IMR-90 (cell line): ENCODE measurements at regions of chr2 and their contacts with region 1.

Region 1: GRCh38 chr2:217988014-217988839 is 14.6 kb downstream of the TNS1 start:
- DNase-seq: peak; percentile 68
- ATAC-seq: peak; percentile 90
- H3K4me3 ChIP-seq: no peak overlapping the region
- H3K27ac ChIP-seq: no peak overlapping the region
- H3K4me1 ChIP-seq: peaks cover 16% of the 10 kb centered on the region
- H3K27me3 ChIP-seq: no peaks in the 10 kb centered on the region
- CTCF ChIP-seq: peak; percentile 94
- POLR2A ChIP-seq: peak; percentile 27; the same call in 1 of the 2 replicates
- RAD21 ChIP-seq: peak; percentile 99

Region 2: DNA sequence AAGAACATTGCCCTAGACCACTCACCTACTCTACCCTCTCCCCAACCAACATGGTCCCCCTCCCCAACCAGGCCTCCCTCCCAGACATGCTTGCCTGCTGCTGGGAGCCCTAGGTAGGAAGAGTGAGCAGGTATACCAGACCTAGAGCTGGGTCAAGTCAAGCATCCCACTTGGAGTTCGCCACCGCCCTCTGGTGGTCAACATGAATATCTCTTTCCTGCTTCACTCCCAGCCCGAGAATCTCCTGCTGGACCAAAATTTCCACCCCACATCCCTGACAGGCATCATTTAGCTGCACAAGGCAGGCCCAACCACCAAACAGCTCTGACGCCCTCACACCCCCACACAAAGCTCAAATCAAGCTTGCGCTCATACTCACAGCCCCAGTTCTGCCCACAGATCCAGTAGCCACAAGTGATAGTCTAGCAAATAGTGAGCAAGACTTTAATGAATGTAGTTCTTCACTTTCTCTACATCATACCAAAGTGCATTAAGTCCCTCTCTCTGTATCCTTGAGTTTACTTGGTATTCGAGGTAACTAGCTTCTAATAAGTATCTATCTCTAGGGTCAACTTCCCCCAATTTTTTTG is 101.4 kb before region 1 on chr2:
- CTCF ChIA-PET with region 1: interaction called, 3 read pairs
- POLR2A ChIA-PET with region 1: no interaction called
- dilution Hi-C with region 1: no loop called
- in situ Hi-C with region 1: no loop called
- intact Hi-C with region 1: loop called (anchors 1 kb)
- DNase-seq: peak; percentile 73
- ATAC-seq: peak; percentile 57; the same call in 1 of the 2 replicates
- H3K4me3 ChIP-seq: no peak overlapping the region
- H3K27ac ChIP-seq: no peak overlapping the region
- H3K4me1 ChIP-seq: no peaks in the 10 kb centered on the region
- H3K27me3 ChIP-seq: no peaks in the 10 kb centered on the region
- CTCF ChIP-seq: peak; percentile 76
- POLR2A ChIP-seq: no peak
- RAD21 ChIP-seq: peak; percentile 74

Region 3: DNA sequence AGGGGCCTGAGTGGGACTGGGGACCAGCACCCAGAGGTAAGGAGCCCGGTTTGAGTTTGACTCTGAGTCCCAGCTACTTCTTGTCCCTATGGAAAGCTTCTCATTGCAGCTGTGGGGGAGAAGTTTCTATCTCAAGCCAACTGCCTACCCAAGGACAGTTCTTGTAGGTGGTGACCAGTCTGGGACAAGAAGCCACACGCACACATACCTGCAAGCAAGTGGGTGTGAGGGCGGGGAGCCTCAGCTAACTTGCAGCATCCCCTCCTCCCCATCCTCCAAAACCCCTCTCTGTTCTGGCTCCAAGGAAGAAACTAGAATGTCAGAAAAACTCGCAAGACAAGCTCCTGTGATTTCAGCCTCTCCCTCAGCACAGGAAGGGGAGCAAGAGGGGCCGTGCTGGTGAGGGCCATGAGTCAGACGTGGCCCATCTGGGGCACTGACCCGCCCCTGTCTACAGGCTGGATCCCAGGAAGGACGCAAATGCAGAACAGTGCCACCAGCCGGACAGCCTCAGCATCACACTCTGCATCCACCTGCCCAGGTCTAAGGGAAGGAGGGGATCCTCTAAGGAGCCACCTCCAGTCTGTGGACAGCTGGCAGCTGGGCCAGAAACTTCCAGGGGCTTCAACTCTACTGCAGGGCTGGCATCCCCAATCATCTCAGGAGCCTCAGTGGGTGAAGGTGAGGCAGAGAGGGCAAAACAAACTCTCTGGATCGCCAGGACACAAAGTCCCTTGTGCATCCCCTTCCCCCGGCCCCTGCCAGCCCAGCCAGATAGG is 88.8 kb before region 1 on chr2:
- CTCF ChIA-PET with region 1: no interaction called
- POLR2A ChIA-PET with region 1: no interaction called
- dilution Hi-C with region 1: no loop called
- in situ Hi-C with region 1: loop called (anchors 5 kb)
- intact Hi-C with region 1: loop called (anchors 2 kb)
- DNase-seq: peak; percentile 91
- ATAC-seq: peak; percentile 79
- H3K4me3 ChIP-seq: no peak overlapping the region
- H3K27ac ChIP-seq: peak overlapping the region; percentile 71
- H3K4me1 ChIP-seq: peaks cover 41% of the 10 kb centered on the region
- H3K27me3 ChIP-seq: no peaks in the 10 kb centered on the region
- CTCF ChIP-seq: peak; percentile 87
- POLR2A ChIP-seq: 0 out of 2 replicates have a peak, but pooled peaks have one; percentile 16
- RAD21 ChIP-seq: peak; percentile 65

Region 4: DNA sequence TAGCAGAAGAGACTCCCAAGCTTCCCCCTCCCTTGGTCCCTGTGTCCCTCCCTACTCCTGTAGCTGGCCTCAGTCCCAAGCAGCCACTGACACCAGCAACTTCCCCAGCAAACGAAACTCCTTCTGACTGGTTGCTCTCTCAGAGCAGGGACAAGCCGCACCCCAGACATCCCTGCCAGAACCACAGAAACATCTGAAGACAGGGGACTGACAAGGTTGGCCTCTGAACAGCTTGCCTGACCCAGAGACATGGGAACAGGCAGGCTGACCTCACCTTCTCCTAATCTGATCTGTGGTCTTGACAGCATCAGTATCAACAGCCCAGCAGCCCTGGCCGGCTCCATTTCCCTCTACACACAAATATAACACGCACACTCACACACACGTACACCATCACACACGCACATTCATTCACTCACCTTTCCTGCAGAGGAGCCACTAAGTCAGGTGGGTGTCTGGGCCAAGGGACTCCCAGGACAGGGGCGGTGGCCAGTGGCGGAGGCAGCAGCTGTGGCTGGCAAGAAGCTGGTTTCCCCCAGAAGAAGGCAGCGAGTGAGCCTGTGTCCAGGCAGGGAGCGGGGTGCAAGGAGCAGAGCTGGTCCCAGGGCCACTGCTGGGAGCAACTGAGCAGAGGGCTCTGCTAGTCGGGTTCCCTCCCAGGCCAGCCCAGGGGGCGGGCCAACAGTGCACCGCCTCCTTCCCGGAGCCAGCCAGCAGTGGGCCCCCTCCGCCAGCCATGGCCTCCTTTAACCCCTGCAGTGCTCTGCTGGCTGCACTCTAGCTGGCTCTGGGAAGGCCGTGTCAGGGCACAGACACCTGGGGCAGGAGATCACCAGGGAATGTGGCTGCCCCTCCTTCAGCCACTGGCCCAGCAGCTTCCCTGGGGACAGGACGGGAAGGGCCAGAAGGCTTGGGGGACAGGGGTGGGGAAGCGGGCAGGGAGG is 44.5 kb before region 1 on chr2:
- CTCF ChIA-PET with region 1: no interaction called
- POLR2A ChIA-PET with region 1: no interaction called
- dilution Hi-C with region 1: no loop called
- in situ Hi-C with region 1: no loop called
- intact Hi-C with region 1: loop called (anchors 1 kb)
- DNase-seq: peak; percentile 58
- ATAC-seq: peak; percentile 98
- H3K4me3 ChIP-seq: peak overlapping the region; percentile 63
- H3K27ac ChIP-seq: peak overlapping the region; percentile 74
- H3K4me1 ChIP-seq: peaks cover 23% of the 10 kb centered on the region
- H3K27me3 ChIP-seq: no peaks in the 10 kb centered on the region
- CTCF ChIP-seq: peak; percentile 63
- POLR2A ChIP-seq: peak; percentile 90
- RAD21 ChIP-seq: peak; percentile 75

Region 5: GRCh38 chr2:218033590-218034496 is 45.6 kb after region 1 on chr2:
- CTCF ChIA-PET with region 1: interaction called, 3 read pairs
- POLR2A ChIA-PET with region 1: no interaction called
- dilution Hi-C with region 1: no loop called
- in situ Hi-C with region 1: no loop called
- intact Hi-C with region 1: loop called (anchors 1 kb)
- DNase-seq: no peak
- ATAC-seq: no peak
- H3K4me3 ChIP-seq: no peak overlapping the region
- H3K27ac ChIP-seq: no peak overlapping the region
- H3K4me1 ChIP-seq: peaks cover 6% of the 10 kb centered on the region; the same call in 1 of the 2 replicates
- H3K27me3 ChIP-seq: peaks cover 40% of the 10 kb centered on the region
- CTCF ChIP-seq: no peak
- POLR2A ChIP-seq: no peak
- RAD21 ChIP-seq: no peak